A673 (cell line): ENCODE measurements at regions of chr13 and their contacts with region 1.

Region 1: GRCh38 chr13:80342471-80343380 is 1.8 kb upstream of the SPRY2 start:
- DNase-seq: peak; percentile 81
- H3K4me3 ChIP-seq: peak overlapping the region; percentile 90
- H3K27ac ChIP-seq: peak overlapping the region; percentile 63
- H3K4me1 ChIP-seq: peaks cover 11% of the 10 kb centered on the region
- H3K27me3 ChIP-seq: no peaks in the 10 kb centered on the region
- CTCF ChIP-seq: peak; percentile 98

Region 2: DNA sequence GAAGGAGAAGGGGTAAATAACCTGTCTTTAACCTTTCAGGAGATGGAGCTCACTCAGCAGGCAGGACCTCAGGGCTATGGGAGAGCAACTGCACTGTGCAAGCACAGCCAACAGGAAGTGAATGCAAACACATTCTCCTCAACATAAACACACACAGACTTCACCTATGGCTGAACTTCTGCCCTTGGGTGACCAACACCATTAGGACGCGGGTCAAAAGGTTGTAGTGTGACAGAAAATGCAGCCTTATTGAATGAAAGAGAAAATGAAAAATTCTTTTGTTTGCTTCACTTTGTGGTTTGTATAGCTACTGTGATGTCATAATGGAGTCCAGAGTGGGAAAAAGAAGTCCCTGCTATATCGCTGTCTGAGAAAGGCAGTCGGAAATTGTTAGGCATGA is 538.7 kb before region 1 on chr13:
- CTCF ChIA-PET with region 1: interaction called, 4 read pairs
- POLR2A ChIA-PET with region 1: no interaction called
- intact Hi-C with region 1: loop called (anchors 5 kb)
- DNase-seq: no peak
- H3K4me3 ChIP-seq: no peak overlapping the region
- H3K27ac ChIP-seq: no peak overlapping the region
- H3K4me1 ChIP-seq: peaks cover 69% of the 10 kb centered on the region
- H3K27me3 ChIP-seq: no peaks in the 10 kb centered on the region
- CTCF ChIP-seq: no peak

Region 3: DNA sequence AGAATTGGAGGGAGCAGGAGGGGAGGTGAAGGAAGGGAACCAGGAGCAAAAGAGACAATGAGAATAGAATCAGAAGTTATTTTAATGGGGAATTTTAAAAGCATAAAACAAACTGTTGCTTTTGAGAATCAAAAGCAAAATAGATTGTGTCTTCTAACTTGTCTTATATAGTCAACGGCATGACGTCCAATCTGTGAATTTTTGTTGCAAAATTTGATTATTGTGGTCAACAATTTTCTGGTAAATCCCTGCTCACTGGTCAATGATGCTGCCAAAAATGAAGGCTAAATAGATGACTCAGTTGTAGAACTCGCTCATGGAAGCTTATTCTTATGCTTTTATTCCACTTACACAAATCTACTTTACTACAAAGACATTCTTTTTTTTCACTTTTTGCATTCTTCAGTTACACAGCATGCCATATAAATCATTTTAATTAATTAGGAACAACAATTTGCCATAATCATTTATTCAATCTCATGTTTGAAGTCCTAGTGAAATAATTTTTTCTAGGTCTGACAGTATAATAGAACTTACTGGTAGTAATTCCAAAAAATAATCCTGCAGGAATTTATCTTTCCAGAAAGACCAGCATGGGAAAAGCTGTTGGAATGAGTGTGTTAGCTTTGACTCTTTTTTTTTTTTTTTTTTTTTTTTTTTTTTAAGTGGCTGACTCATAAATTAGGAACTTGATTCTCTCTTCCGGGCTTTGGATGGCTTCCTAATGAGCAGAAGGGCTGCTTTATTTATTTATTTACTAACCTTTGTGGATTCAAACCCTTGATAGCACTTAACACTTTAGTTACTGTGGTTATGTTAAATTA is 258.7 kb before region 1 on chr13:
- CTCF ChIA-PET with region 1: no interaction called
- POLR2A ChIA-PET with region 1: no interaction called
- intact Hi-C with region 1: loop called (anchors 5 kb)
- DNase-seq: peak; percentile 86
- H3K4me3 ChIP-seq: peak overlapping the region; percentile 2
- H3K27ac ChIP-seq: peak overlapping the region; percentile 26
- H3K4me1 ChIP-seq: peaks cover 28% of the 10 kb centered on the region
- H3K27me3 ChIP-seq: no peaks in the 10 kb centered on the region
- CTCF ChIP-seq: no peak

Region 4: DNA sequence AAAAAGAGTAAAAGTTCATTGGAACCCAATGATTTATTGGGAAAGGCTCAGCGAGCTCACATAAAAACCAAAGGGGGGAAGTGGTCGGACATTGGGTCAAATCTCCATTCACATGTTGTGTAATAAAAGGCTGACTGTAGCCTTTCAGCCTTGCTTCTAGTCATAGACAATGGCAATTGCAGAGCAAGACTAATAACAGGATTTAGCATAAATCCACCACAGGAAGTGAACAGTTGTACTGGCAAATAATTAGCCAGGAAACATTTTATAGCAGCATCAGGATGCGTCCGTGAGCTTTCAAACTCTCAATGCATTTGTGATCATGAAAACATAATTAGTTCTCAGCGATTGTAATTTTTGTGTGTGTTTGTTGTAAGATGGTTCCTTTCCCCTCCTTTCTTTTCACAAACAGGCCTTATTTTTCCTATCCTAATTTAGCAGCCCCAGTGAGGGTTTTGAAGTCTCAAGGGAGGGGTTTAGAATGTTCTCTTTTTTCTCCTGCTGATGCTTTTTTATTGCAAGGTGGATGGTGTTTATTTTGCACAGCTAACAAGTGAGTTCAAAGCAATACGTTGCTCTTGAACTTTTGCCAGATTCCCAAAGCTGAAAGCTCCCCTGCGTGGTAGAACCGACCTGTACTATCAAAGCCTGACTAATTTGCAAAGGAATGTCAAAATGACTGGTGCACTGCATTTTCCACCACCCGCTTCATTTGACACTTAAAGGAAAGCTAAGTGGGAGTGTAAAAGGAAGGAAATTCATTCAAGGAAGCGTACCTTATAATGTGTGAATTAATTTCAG is 107.4 kb before region 1 on chr13:
- CTCF ChIA-PET with region 1: interaction called, 3 read pairs
- POLR2A ChIA-PET with region 1: no interaction called
- intact Hi-C with region 1: loop called (anchors 5 kb)
- DNase-seq: peak; percentile 92
- H3K4me3 ChIP-seq: peak overlapping the region; percentile 4
- H3K27ac ChIP-seq: peak overlapping the region; percentile 77
- H3K4me1 ChIP-seq: peaks cover 29% of the 10 kb centered on the region
- H3K27me3 ChIP-seq: no peaks in the 10 kb centered on the region
- CTCF ChIP-seq: no peak

Region 5: DNA sequence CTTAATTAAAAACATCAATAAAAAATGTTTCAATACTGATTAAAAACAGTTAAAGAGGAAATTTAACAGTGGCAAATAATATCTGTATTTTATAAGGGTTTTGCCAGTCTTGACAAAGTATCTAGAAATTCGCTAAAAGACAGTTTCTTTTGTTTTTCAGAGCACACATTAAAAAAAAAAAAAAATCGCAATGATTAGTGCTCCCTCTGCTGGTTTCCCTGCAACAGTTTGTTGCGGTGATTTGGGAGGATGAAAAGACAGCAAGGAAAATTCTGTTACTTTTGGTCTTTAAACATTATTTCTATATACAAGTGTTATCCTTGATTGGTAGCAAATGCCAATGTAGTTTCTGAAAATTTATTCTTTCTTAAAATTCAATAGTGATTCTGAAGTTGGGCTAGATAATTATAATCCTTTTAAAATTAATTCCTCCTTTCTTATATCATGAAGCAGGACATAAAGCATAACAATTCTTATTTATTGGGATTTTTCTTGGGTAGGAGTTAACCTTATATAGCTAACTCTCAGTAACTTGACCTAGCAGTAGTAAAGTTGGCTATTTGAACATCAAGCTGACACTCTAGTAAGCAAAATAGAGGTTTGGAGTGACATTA is 21.3 kb after region 1 on chr13:
- CTCF ChIA-PET with region 1: no interaction called
- POLR2A ChIA-PET with region 1: no interaction called
- intact Hi-C with region 1: loop called (anchors 1 kb)
- DNase-seq: peak; percentile 58
- H3K4me3 ChIP-seq: no peak overlapping the region
- H3K27ac ChIP-seq: no peak overlapping the region
- H3K4me1 ChIP-seq: peaks cover 45% of the 10 kb centered on the region
- H3K27me3 ChIP-seq: no peaks in the 10 kb centered on the region
- CTCF ChIP-seq: peak; percentile 88

Region 6: DNA sequence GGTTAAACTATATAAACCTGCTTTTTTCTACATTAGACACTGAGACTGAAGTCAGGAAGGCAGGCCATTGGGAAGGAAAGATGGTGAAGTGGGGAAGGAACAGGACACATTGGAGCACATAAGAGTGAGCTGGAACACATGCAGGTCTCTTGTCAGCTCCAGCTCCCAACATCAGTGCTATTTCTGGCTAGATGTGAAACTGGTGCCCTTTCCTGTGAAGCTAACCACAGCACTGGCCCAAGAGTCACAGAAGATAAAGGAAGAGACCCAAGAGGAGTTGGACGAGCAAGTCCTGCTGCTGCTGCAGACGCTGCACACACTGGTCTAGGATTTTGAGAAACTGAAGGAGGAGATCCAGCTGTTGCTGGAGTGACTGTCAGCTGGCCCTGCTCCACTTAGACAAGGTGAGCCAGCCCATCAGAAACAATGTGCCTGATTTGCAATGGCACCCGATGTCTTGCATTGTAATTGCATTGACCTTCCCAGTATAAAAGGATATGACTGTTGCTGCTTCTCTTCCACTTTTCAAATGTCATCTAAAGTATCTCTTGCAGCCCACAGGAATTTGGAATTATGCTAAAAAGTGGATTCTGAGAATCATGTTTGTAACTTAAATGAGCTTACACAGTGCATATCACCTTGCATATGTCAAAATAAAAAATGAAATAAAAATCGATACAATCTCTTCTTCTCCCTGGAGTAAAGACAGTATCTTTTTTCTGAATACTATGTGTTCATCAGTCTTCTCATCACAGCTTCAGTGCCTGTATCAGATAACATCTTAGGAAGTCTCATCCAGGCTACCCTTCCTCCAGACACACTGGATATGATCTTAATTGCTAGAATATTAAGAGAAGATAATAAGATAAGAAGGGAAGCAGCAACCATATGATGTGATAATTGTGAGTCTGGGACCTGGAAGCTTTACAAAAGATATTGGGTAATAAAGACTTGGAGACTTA is 228.9 kb after region 1 on chr13:
- CTCF ChIA-PET with region 1: no interaction called
- POLR2A ChIA-PET with region 1: no interaction called
- intact Hi-C with region 1: no loop called
- DNase-seq: no peak
- H3K4me3 ChIP-seq: no peak overlapping the region
- H3K27ac ChIP-seq: no peak overlapping the region
- H3K4me1 ChIP-seq: peaks cover 10% of the 10 kb centered on the region
- H3K27me3 ChIP-seq: peaks cover 18% of the 10 kb centered on the region
- CTCF ChIP-seq: no peak

Region 7: DNA sequence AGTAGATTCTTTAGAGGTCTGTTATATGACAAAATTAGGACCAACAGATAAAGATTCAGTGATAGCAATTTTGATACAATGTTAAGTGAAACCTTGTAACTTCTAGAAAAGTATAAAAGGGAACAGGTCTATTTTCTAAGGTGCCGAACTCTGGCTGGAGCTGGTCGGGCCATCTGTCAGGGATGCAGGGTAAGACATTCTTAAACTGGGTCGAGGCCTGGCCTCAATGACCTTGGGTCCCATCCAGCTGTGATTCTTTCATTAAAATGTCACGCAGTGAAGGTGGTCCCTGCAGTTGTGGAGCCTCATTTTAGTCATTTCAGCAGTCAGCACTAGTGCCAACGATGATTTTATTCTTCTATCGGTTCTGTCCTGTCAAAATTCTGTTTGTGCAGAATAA is 270.1 kb after region 1 on chr13:
- CTCF ChIA-PET with region 1: no interaction called
- POLR2A ChIA-PET with region 1: no interaction called
- intact Hi-C with region 1: no loop called
- DNase-seq: no peak
- H3K4me3 ChIP-seq: no peak overlapping the region
- H3K27ac ChIP-seq: no peak overlapping the region
- H3K4me1 ChIP-seq: no peaks in the 10 kb centered on the region
- H3K27me3 ChIP-seq: no peaks in the 10 kb centered on the region
- CTCF ChIP-seq: no peak

Region 8: DNA sequence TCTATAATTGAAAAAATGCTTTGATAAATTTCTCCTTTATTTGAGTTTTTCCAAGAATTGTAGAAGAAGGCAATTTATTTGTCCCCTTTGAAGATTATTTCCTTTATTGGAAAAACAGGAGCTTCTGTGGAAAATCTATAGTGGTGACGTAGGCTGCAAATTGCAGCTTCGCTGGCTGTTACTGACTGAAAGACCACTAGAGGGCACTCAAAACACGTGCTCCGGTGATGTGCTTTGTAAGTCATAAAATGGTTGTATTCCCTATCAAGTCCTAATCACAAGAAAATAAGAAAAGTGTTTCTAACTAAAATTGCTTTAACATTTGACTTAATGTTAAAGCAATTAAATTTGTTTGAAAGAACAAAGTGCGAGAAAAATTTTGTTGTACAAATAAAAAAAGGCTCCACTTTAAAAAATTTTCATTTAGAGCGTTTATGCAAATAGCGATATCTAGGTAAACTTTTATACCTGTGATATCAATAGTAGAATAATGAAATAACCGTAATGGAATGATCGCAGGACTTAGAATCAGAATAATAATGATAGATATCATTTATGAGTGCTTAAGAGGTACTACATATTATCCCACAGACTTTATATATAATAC is 636.4 kb after region 1 on chr13:
- CTCF ChIA-PET with region 1: interaction called, 10 read pairs
- POLR2A ChIA-PET with region 1: no interaction called
- intact Hi-C with region 1: no loop called
- DNase-seq: peak; percentile 77
- H3K4me3 ChIP-seq: no peak overlapping the region
- H3K27ac ChIP-seq: no peak overlapping the region
- H3K4me1 ChIP-seq: no peaks in the 10 kb centered on the region
- H3K27me3 ChIP-seq: no peaks in the 10 kb centered on the region
- CTCF ChIP-seq: peak; percentile 88